ENCODE measurements at regions of chr9 and their contacts with region 1.

Region 1: DNA sequence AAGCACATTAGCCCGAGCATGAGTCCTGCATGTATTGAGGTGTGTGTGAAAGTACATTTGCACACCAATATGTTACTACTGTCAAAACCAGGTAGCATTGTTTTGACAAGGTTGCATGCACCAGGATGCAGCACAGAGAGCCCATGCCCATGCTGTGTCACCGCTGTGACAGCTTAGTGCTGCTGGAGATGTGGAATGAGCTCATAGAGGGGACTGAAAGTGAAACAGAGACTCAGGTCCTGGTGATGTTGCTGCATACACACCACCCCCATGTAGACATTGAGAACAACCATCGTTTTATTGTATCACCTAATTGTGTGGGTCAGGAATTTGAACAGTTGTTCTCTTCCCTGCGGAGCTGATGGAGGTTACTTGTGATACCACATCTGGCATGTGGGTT is 53.0 kb downstream of the GADD45G start:
- DNase-seq: no peak
- H3K4me3 ChIP-seq: no peak overlapping the region
- H3K27ac ChIP-seq: no peak overlapping the region
- H3K4me1 ChIP-seq: peaks cover 7 to 20% of the 10 kb centered on the region in 2 donors
- H3K27me3 ChIP-seq: no peaks in the 10 kb centered on the region
- CTCF ChIP-seq: no peak
- POLR2A ChIP-seq: no peak

Region 2: DNA sequence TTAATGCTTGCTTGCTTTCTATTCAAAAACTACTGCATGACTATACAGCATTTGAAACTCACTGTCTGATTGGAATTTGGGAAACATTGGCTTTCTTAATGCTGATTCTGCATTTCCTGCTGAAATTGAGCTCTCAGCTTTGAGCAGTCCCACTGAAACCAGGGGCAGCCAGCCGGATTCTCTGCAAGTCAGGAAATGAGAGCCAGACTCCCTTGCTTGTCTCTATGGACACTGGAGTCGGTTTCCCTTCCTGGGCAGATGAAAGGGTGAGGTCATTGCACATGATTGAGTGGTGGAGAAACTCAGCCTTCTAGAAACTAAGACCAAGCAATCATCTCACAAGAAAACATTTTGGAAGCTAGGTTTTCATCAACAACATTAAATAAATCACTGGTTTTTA is 1399.7 kb before region 1 on chr9:
- intact Hi-C with region 1: loop called (anchors 10 kb)
- DNase-seq: peak in 1 of 2 donors; percentile 25
- H3K4me3 ChIP-seq: no peak overlapping the region
- H3K27ac ChIP-seq: no peak overlapping the region
- H3K4me1 ChIP-seq: no peaks in the 10 kb centered on the region
- H3K27me3 ChIP-seq: no peaks in the 10 kb centered on the region
- CTCF ChIP-seq: no peak
- POLR2A ChIP-seq: no peak

Region 3: DNA sequence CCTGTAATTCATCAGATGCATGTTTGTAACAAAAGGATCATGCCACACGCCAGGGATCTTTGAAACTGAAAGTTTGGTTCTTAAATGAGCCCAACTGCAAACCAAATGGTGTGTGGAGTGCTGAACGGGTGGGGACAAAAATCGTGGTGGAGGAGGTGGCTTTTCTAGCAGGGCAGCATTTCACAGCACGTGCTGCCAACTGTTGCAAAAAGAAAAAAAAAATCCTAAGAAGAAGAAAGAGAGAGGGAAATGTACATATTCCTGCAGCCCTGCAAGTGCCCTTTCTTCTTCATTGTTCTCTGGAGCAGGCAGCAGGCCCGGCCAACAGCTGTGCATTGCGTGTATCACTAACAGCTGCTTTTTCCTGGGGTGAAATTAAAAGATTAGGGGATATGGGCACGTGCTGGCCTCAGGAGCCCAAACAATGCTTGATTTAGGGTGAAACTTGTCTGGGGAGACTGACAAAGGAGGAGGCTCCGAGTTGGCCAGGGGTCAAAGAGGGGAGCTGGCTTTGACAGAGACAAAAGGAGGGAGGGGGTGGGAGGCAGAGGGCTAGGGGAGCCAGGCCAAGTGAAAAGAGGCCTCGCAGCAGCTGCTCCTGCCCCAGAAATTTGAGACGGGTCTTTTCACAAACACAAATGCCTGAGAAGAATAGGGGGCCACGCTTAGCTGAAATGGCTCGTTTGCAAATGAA is 20.1 kb after region 1 on chr9:
- intact Hi-C with region 1: loop called (anchors 1 kb)
- DNase-seq: no peak
- H3K4me3 ChIP-seq: no peak overlapping the region
- H3K27ac ChIP-seq: no peak overlapping the region
- H3K4me1 ChIP-seq: no peaks in the 10 kb centered on the region
- H3K27me3 ChIP-seq: no peaks in the 10 kb centered on the region
- CTCF ChIP-seq: no peak
- POLR2A ChIP-seq: no peak

Region 4: DNA sequence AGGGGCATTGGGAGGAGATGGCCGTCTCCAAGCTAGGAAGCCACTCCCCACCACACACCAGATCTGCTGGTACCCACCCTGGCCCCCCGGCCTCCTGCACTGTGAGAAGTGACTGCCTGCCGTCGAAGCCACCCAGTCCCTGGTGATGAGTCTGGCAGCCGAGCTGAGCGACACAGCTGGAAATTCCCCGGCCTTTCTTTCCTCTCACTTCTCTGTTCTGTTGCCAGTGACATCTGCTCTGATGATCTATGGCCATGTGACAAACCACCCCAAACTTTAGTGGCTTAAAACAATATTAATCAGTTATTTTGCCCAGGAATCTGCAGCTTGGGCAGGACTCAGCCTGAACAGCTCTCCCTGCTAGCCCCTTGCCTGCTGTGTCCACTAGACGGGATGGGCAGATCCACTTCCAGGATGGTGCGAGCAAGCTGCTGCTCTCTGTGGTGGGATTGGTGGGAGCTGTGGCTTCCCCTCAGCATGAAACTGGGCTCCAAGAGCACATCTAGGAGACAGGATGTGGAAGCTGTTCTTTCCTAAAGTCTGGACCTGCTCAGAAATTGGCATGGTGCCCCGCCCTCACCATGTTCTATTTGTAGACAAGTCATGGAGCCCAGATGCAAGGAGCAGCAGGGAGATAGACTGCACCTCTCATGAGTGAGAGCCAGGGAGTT is 158.3 kb after region 1 on chr9:
- intact Hi-C with region 1: no loop called
- DNase-seq: no peak
- H3K4me3 ChIP-seq: no peak overlapping the region
- H3K27ac ChIP-seq: no peak overlapping the region
- H3K4me1 ChIP-seq: no peaks in the 10 kb centered on the region
- H3K27me3 ChIP-seq: peaks cover 0 to 17% of the 10 kb centered on the region in 2 donors
- CTCF ChIP-seq: no peak
- POLR2A ChIP-seq: no peak

Measured in breast epithelium (tissue), 4 donors.